ENCODE measurements at regions of chr6 and their contacts with region 1.

Region 1: GRCh38 chr6:22426994-22427393 is 130.2 kb upstream of the PRL start:
- DNase-seq: no peak
- CTCF ChIP-seq: no peak

Region 2: GRCh38 chr6:21971541-21971940 is 455.5 kb before region 1 on chr6:
- CTCF ChIA-PET with region 1: no interaction called
- POLR2A ChIA-PET with region 1: no interaction called
- DNase-seq: no peak
- CTCF ChIP-seq: no peak

Region 3: GRCh38 chr6:22062807-22063408 is 364.1 kb before region 1 on chr6:
- CTCF ChIA-PET with region 1: no interaction called
- POLR2A ChIA-PET with region 1: no interaction called
- DNase-seq: peak; percentile 32
- CTCF ChIP-seq: no peak

Region 4: DNA sequence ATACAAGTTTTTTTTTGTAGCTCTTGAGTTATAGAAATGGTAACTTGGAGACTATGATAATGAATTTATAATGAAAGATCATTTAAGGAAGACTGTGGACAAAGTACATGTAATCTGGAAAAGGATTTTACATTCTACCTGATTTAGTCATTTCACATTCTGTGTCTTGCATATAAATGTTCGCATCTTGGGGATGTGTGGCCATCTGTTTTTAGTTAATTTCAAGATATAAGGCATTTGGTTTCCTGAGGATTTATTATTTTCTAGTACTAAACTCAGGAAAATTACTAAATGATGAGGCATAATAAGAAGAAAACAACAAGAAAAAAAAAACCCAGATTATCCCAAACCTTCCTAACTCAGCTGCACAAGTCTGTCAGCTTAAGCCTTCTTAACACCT is 17.5 kb before region 1 on chr6:
- CTCF ChIA-PET with region 1: interaction called, 10 read pairs
- POLR2A ChIA-PET with region 1: no interaction called
- DNase-seq: no peak
- CTCF ChIP-seq: no peak

Measured in GM10248 (cell line).